Upper lobe of right lung (tissue), 1 donor: ENCODE measurements at regions of chr20 and their contacts with region 1.

Region 1: GRCh38 chr20:35718972-35719635 is 19.9 kb downstream of the ROMO1 start:
- DNase-seq: no peak
- ATAC-seq: no peak
- H3K4me3 ChIP-seq: no peak overlapping the region
- H3K27ac ChIP-seq: no peak overlapping the region
- H3K4me1 ChIP-seq: no peaks in the 10 kb centered on the region
- H3K27me3 ChIP-seq: no peaks in the 10 kb centered on the region
- CTCF ChIP-seq: no peak

Region 2: DNA sequence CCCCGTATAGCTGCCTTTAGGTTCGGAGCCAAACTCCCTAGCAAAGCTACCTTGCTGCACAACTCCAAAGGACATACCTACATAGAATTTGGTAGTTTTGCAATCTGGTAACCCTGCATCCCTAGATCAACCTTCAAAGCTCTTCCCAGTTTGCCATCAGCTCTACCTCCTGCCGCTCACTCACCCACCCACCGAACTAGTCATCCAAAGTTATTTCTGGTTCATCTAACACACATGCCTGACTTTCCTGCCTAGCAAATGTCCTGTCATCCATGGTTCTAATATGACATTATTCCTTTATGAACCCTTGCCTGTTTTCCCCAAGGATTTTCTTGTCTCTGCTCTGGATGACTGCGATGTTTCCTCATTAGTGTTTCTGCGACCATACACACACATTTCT is 81.8 kb before region 1 on chr20:
- intact Hi-C with region 1: no loop called
- DNase-seq: no peak
- ATAC-seq: no peak
- H3K4me3 ChIP-seq: no peak overlapping the region
- H3K27ac ChIP-seq: no peak overlapping the region
- H3K4me1 ChIP-seq: no peaks in the 10 kb centered on the region
- H3K27me3 ChIP-seq: no peaks in the 10 kb centered on the region
- CTCF ChIP-seq: no peak

Region 3: DNA sequence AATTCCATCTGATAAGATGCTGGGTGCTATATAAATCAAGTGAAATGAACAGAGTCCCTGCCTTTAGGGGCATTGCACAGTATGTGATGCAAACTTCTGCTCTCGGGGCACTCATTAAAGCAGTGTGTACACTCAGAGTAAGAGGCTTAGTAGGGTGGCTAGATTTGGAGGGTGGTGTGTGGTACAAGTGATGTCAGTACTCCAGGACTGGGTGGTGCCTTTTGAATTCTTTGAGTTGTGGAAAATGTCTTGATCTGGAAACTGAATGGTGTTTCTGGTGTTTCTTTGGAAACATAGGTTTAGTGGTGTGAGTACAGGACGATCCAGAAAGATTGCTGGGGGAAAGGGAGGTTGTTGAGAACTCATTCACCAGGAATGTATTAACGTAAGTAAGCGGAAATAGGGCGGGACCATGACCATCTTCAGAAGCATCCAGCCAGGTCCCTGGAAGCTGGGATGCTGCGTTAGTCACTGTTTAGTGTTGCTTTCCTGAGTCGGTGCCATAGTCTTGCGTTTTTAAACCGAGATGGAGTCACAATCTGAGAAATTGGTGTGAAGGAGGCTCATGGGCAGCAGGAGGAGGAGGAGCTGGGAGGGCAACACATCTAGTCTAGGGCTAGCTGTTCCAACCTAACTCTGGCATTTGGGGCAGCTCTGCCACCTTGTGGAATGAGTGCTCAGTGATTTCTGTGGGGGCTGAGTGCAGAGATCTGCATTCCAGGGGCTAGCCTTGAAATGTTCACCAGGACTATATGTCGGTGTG is 164.9 kb after region 1 on chr20:
- intact Hi-C with region 1: loop called (anchors 10 kb)
- DNase-seq: peak; percentile 70
- ATAC-seq: peak; percentile 97
- H3K4me3 ChIP-seq: no peak overlapping the region
- H3K27ac ChIP-seq: peak overlapping the region; percentile 55
- H3K4me1 ChIP-seq: no peaks in the 10 kb centered on the region
- H3K27me3 ChIP-seq: no peaks in the 10 kb centered on the region
- CTCF ChIP-seq: peak; percentile 77